GM12878 (cell line): ENCODE measurements at regions of chr9 and their contacts with region 1.

Region 1: GRCh38 chr9:27333241-27334052 is 36.5 kb upstream of the EQTN start:
- DNase-seq: peak; percentile 40
- ATAC-seq: peak; percentile 90
- H3K4me3 ChIP-seq: no peak overlapping the region
- H3K27ac ChIP-seq: no peak overlapping the region
- H3K4me1 ChIP-seq: no peaks in the 10 kb centered on the region
- H3K27me3 ChIP-seq: no peaks in the 10 kb centered on the region
- CTCF ChIP-seq: peak; percentile 70 to 78 (median 71)
- EP300 ChIP-seq: no peak
- POLR2A ChIP-seq: no peak
- RAD21 ChIP-seq: peak; percentile 93

Region 2: DNA sequence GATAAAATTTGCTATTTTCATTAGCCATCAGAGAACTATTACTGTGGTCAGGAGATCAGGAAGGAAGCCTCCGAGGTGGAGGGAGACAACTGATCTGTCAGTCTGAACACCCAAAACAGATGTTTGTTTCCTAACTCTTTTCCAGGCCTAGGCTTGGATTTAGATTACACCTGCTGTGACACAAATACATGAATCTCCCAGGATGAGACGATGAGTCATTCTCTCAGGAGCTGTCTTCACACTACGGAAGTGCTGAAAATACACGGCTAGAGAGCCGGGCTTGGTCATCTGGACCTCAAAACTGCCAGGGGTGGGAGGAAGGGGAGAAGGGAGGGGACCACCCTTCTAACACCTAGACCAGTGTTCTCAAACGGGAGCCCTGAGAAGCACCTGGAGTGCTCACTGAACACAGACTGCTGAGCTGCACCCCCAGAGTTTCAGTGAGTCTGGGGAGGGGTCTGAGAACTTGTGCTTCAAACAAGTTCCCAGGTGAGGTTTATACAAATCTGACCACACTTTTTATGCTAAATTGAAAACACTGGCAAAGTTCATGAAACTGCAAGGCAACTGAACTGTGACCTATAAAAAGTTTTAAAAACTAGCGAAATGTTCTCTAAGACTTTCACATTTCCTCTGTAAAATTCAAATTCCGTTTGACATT is 43.8 kb after region 1 on chr9:
- CTCF ChIA-PET with region 1: interaction called, 8 read pairs
- POLR2A ChIA-PET with region 1: no interaction called
- RAD21 ChIA-PET with region 1: interaction called, 10 read pairs
- SMC1A ChIA-PET with region 1: interaction called, 3 read pairs
- in situ Hi-C with region 1: no loop called
- intact Hi-C with region 1: loop called (anchors 1 kb)
- DNase-seq: no peak
- ATAC-seq: peak; percentile 32
- H3K4me3 ChIP-seq: peak overlapping the region; percentile 55
- H3K27ac ChIP-seq: peak overlapping the region; percentile 87
- H3K4me1 ChIP-seq: peaks cover 33% of the 10 kb centered on the region
- H3K27me3 ChIP-seq: no peaks in the 10 kb centered on the region
- CTCF ChIP-seq: no peak
- EP300 ChIP-seq: 0 out of 4 replicates have a peak, but pooled peaks of 1 of the 2 experiments have one; percentile 8
- POLR2A ChIP-seq: no peak
- RAD21 ChIP-seq: no peak

Region 3: DNA sequence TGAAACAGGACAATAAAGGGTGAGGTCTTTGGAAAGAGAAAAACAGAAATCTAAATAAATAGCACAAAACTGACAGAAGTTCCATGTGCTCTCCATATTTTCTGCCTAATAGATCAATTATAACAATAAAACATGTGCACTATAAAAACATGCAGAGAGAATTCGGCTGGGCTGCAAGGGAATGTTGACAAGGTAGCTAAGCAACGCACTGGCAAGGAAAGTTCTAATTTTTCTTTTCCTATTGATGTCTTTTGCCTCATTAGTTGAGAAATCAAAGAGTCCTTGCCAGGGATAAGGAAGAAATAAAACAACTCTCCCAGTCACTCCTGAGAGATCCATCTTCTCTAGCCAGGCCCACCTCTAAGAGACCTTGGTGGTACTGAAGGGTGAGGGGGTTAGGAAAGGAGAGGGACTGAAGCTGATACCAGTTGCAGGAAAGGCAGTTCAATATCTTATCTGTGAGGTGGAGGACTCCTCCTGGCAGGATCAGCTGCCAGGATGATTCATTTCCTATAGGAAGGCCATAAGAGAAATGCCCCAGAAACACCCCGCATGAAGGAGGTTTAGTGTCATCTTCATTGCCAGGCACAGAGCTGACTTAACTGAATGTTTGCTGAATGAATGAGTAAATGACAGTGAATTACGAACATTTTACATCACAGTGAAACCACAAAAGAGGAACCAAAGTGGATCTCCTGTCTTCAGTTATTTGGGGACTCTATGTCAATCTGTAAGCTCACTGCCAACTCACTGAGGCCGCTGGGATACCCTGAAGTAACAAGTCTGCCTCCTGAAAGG is 127.0 kb after region 1 on chr9:
- CTCF ChIA-PET with region 1: interaction called, 9 read pairs
- POLR2A ChIA-PET with region 1: no interaction called
- RAD21 ChIA-PET with region 1: interaction called, 5 read pairs
- SMC1A ChIA-PET with region 1: interaction called, 3 read pairs
- in situ Hi-C with region 1: no loop called
- intact Hi-C with region 1: loop called (anchors 2 kb)
- DNase-seq: peak; percentile 37
- ATAC-seq: peak; percentile 96
- H3K4me3 ChIP-seq: no peak overlapping the region
- H3K27ac ChIP-seq: no peak overlapping the region
- H3K4me1 ChIP-seq: peaks cover 12% of the 10 kb centered on the region; the same call in 1 of the 2 replicates
- H3K27me3 ChIP-seq: no peaks in the 10 kb centered on the region
- CTCF ChIP-seq: no peak
- EP300 ChIP-seq: no peak
- POLR2A ChIP-seq: no peak
- RAD21 ChIP-seq: no peak

Region 4: DNA sequence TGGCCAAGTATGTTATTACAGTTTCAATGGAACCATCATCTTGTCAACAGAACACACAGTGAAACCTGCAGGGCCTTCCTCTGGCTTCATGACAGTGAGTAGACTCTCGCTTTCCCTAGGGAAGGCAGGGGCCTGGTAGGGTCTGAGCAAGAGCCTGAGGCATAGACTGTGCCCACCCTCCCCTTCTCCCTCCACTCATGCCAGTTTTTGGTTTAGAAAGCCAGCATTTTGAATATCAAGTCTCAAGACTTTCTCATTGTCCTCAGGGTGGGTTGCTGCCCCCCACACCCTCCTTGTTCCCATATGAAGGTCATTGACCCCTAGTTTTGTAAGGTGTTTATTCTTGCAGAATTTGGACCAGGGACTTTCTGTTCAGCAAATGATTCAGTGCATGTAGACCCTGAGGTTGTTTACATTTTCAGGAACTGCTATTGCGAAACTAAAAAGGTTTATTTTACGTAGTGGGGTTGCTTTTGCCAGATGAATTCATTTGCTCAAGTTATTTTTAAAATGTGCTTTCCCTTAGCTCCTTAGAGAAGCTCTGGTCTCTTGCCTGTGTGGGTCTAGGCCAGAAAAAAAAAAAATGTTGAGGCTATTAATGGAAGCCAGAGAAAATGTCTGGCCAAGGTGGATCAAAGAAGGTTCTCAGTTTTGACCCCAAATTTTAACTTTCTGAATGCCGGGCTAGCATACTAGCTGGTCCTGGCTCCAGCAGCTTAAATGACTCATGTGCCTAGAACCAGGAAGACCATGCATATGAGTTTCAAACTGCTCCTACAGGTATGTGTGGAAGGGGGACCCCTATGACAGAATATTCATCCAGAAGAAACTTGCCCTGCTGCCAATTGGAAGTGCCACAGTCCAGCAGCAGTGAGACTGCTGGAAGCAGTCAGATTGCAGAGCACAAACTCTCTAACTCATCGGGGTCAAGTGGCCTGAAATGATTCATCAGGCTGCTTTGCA is 206.3 kb after region 1 on chr9:
- CTCF ChIA-PET with region 1: interaction called, 100 read pairs
- POLR2A ChIA-PET with region 1: interaction called, 7 read pairs
- RAD21 ChIA-PET with region 1: interaction called, 85 read pairs
- SMC1A ChIA-PET with region 1: interaction called, 91 read pairs
- in situ Hi-C with region 1: no loop called
- intact Hi-C with region 1: no loop called
- DNase-seq: peak; percentile 35
- ATAC-seq: peak; percentile 66
- H3K4me3 ChIP-seq: no peak overlapping the region
- H3K27ac ChIP-seq: peak overlapping the region; percentile 4
- H3K4me1 ChIP-seq: peaks cover 10% of the 10 kb centered on the region
- H3K27me3 ChIP-seq: no peaks in the 10 kb centered on the region
- CTCF ChIP-seq: no peak
- EP300 ChIP-seq: 0 out of 4 replicates have a peak, but pooled peaks have one; percentile 9 to 42
- POLR2A ChIP-seq: no peak
- RAD21 ChIP-seq: no peak

Region 5: GRCh38 chr9:27726244-27727081 is 393.0 kb after region 1 on chr9:
- CTCF ChIA-PET with region 1: interaction called, 9 read pairs
- POLR2A ChIA-PET with region 1: no interaction called
- RAD21 ChIA-PET with region 1: interaction called, 8 read pairs
- SMC1A ChIA-PET with region 1: interaction called, 8 read pairs
- in situ Hi-C with region 1: no loop called
- intact Hi-C with region 1: loop called (anchors 5 kb)
- DNase-seq: peak; percentile 20
- ATAC-seq: peak; percentile 88
- H3K4me3 ChIP-seq: no peak overlapping the region
- H3K27ac ChIP-seq: no peak overlapping the region
- H3K4me1 ChIP-seq: no peaks in the 10 kb centered on the region
- H3K27me3 ChIP-seq: no peaks in the 10 kb centered on the region; a peak in 1 of 4 replicates
- CTCF ChIP-seq: peak; percentile 78 to 89 (median 81); a peak in 5 of 6 replicates
- EP300 ChIP-seq: no peak
- POLR2A ChIP-seq: no peak
- RAD21 ChIP-seq: peak; percentile 93